WTC11 (cell line): ENCODE measurements at regions of chr20 and their contacts with region 1.

Region 1: GRCh38 chr20:1946762-1947534 is 46.9 kb downstream of the PDYN start:
- DNase-seq: peak; percentile 90
- ATAC-seq: peak; percentile 81
- H3K4me3 Mint-ChIP-seq: peak overlapping the region; percentile 72
- H3K27ac Mint-ChIP-seq: peak overlapping the region; percentile 75
- H3K4me1 Mint-ChIP-seq: peaks cover 64% of the 10 kb centered on the region
- H3K27me3 Mint-ChIP-seq: peaks cover 42% of the 10 kb centered on the region
- CTCF ChIP-seq: no peak

Region 2: DNA sequence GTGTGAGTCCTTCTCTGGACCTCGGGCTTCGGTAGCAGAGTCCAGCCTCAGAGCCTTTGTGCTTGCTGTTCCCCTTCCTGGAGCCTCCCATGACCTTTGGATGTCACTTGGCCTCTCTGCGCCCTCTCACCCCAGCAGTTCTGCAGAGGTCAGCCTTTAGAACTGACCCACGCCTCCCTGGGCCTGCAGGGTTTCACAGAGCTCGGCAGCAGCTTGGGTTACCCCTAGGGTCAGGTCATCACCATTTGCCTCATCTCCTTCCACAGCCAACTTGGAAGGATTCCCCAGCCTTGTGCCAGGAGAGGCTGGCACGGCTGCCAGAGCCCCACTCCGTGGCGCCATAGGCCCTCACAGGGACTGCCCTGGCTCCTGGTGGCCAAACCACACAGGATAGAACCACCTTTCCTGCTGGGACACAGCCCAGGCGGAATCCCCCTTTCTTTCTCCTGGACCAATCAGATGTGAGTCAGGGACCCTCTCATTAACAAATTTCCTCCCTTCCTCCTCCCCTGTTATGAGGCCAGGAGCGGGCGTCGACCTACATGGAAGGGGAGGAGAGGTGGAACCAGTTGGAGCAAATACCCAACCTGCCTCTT is 65.6 kb before region 1 on chr20:
- CTCF ChIA-PET with region 1: no interaction called
- POLR2A ChIA-PET with region 1: no interaction called
- DNase-seq: no peak
- ATAC-seq: peak; percentile 37; the same call in 1 of the 2 replicates
- H3K4me3 Mint-ChIP-seq: no peak overlapping the region
- H3K27ac Mint-ChIP-seq: no peak overlapping the region
- H3K4me1 Mint-ChIP-seq: peaks cover 23% of the 10 kb centered on the region
- H3K27me3 Mint-ChIP-seq: peaks cover 5% of the 10 kb centered on the region; the same call in 1 of the 2 replicates
- CTCF ChIP-seq: no peak

Region 3: GRCh38 chr20:1979106-1979779 is 32.3 kb after region 1 on chr20:
- CTCF ChIA-PET with region 1: no interaction called
- POLR2A ChIA-PET with region 1: no interaction called
- DNase-seq: no peak
- ATAC-seq: no peak
- H3K4me3 Mint-ChIP-seq: no peak overlapping the region
- H3K27ac Mint-ChIP-seq: no peak overlapping the region
- H3K4me1 Mint-ChIP-seq: no peaks in the 10 kb centered on the region
- H3K27me3 Mint-ChIP-seq: peaks cover 4% of the 10 kb centered on the region
- CTCF ChIP-seq: no peak

Region 4: DNA sequence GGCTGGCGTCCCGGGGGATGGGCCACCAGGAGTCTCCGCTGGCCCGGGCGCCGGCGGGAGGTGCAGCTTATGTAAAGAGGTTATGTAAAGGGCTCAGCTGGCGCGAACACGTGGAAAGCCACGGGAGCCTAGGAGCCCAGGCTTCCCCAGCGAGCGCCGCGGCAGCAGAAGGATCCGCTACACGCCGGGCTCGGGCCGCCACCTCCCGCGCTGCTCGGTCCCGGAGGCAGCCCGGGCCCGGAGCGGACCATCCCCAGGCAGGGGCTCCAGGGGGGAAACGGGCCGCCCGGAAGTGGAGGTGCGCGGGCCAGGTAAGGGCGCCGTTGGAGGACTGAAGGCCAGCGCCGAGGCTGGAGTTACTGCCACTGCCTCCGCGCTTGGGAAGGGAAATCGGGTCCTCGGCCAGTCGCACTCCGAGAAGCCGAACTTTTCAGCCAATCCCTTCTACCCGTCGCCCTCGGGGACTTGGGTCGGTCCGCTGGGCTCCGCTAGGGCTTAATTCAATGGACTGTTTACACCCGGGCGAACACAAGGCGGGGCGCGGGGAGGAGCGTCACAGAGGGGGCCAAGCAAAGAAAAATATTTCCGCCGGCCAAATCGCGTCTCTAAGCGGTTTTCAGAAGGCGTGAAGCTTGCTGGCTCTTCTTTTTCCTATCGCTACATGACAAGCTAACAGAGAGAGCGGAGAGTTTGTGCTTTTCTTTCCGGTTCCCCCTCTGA is 155.1 kb after region 1 on chr20:
- CTCF ChIA-PET with region 1: no interaction called
- POLR2A ChIA-PET with region 1: interaction called, 10 read pairs
- DNase-seq: peak; percentile 87
- ATAC-seq: peak; percentile 83
- H3K4me3 Mint-ChIP-seq: peak overlapping the region; percentile 83
- H3K27ac Mint-ChIP-seq: peak overlapping the region; percentile 100
- H3K4me1 Mint-ChIP-seq: peaks cover 43% of the 10 kb centered on the region
- H3K27me3 Mint-ChIP-seq: no peaks in the 10 kb centered on the region
- CTCF ChIP-seq: no peak